MCF 10A (cell line): ENCODE measurements at regions of chr1 and their contacts with region 1.

Region 1: DNA sequence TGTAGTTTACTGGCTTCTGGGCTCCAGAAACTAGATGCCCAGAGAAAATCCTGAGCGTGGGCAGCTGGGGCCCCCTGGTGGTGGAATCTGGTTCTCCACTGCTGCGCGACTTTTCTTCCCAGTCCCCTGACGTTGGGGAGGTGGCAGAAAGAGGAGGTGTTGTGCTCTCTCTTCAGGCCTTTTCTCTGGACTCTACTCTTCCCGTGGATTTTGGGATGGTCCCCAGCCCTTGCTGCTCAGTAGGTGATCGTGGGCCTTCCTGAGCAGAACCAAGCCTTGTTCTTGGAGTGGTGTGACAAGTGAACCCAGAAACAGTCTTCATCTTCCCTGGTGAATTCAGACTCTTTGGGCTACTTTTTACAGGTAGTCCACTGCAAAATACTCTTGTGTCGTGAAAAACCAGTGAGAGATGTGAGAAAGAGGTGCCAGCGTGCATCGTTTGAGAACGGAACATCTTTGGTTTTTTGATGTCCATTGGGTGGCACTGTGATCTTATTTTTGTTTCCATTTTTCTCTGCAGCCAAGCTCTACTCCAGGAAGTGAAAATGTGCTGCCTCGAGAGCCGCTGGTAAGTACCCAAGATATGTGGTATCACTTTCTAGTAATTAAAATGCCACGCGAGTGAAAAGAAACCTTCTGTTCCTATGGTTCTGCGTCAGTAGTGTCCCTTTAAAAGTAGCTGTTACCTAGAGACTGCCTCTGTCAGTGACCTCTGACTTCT is 20.2 kb downstream of the PEX14 start:
- DNase-seq: peak; percentile 76
- H3K4me3 Mint-ChIP-seq: peak overlapping the region; percentile 58
- H3K27ac Mint-ChIP-seq: peak overlapping the region; percentile 80
- H3K4me1 Mint-ChIP-seq: peaks cover 26% of the 10 kb centered on the region
- H3K27me3 Mint-ChIP-seq: no peaks in the 10 kb centered on the region
- CTCF ChIP-seq: peak; percentile 83

Region 2: GRCh38 chr1:10267319-10267718 is 227.6 kb before region 1 on chr1:
- CTCF ChIA-PET with region 1: no interaction called
- POLR2A ChIA-PET with region 1: no interaction called
- intact Hi-C with region 1: no loop called
- DNase-seq: peak; percentile 17
- H3K4me3 Mint-ChIP-seq: no peak overlapping the region
- H3K27ac Mint-ChIP-seq: no peak overlapping the region
- H3K4me1 Mint-ChIP-seq: no peaks in the 10 kb centered on the region
- H3K27me3 Mint-ChIP-seq: no peaks in the 10 kb centered on the region
- CTCF ChIP-seq: no peak

Region 3: DNA sequence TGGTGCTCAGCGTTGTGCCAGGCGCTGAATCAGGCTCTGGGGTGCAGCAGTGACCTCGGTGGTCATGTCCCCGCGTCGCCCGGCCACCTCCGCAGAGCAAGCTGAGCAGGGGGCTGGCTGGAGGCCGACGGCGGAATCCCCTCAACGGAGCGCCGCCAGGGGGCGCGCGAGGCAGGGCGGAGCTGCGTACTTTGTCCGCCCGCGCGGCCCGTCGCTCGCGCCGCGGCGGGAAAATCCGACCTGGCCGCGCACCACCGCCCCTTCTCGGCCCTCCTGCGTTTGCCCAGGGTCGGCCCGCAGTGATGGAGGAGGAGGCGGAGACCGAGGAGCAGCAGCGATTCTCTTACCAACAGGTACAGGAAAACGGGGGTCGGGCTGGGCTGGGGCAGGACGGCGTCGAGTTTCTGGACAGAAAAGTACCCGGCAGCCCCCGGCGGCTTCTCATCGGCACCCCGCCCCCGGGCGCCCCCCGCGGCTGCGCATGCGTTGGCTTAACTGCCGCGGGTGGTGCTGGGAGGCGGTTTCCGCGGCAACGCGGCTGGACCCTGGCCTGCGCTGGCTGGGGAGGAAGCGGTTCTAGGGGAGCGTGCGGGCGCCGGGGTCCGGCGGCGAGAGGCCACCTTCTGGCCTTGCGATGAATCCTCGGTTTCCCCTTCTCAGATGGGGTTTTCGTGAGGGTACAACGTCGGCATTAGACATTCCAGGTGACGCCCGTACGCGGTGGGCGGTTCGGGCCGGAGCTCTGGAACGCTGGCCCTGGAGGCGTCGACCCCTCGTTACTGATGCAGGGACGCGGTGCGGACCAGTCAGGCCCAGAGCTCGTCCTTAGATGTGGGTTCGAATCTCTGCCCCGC is 64.5 kb before region 1 on chr1 and contains the start of gene CENPS:
- CTCF ChIA-PET with region 1: interaction called, 119 read pairs
- POLR2A ChIA-PET with region 1: interaction called, 73 read pairs
- intact Hi-C with region 1: no loop called
- DNase-seq: peak; percentile 88
- H3K4me3 Mint-ChIP-seq: peak within 1 kb of the TSS; percentile 89
- H3K27ac Mint-ChIP-seq: peak within 1 kb of the TSS; percentile 87
- H3K4me1 Mint-ChIP-seq: peaks cover 10% of the 10 kb centered on the region
- H3K27me3 Mint-ChIP-seq: no peaks in the 10 kb centered on the region
- CTCF ChIP-seq: peak; percentile 98
- total RNA-seq, gene CENPS: 19.0 and 19.4 TPM in 2 replicates

Region 4: GRCh38 chr1:10467051-10467450 is 27.9 kb before region 1 on chr1:
- CTCF ChIA-PET with region 1: interaction called, 18 read pairs
- POLR2A ChIA-PET with region 1: interaction called, 10 read pairs
- intact Hi-C with region 1: no loop called
- DNase-seq: no peak
- H3K4me3 Mint-ChIP-seq: no peak overlapping the region
- H3K27ac Mint-ChIP-seq: no peak overlapping the region
- H3K4me1 Mint-ChIP-seq: no peaks in the 10 kb centered on the region
- H3K27me3 Mint-ChIP-seq: no peaks in the 10 kb centered on the region
- CTCF ChIP-seq: no peak

Region 5: GRCh38 chr1:10484521-10484920 is 10.4 kb before region 1 on chr1:
- CTCF ChIA-PET with region 1: interaction called, 32 read pairs
- POLR2A ChIA-PET with region 1: interaction called, 13 read pairs
- intact Hi-C with region 1: no loop called
- DNase-seq: no peak
- H3K4me3 Mint-ChIP-seq: no peak overlapping the region
- H3K27ac Mint-ChIP-seq: no peak overlapping the region
- H3K4me1 Mint-ChIP-seq: peaks cover 3% of the 10 kb centered on the region
- H3K27me3 Mint-ChIP-seq: no peaks in the 10 kb centered on the region
- CTCF ChIP-seq: no peak

Region 6: GRCh38 chr1:10901086-10901890 is 406.4 kb after region 1 on chr1:
- CTCF ChIA-PET with region 1: interaction called, 3 read pairs
- POLR2A ChIA-PET with region 1: interaction called, 16 read pairs
- intact Hi-C with region 1: no loop called
- DNase-seq: peak; percentile 63
- H3K4me3 Mint-ChIP-seq: peak overlapping the region; percentile 72
- H3K27ac Mint-ChIP-seq: peak overlapping the region; percentile 93
- H3K4me1 Mint-ChIP-seq: peaks cover 43% of the 10 kb centered on the region
- H3K27me3 Mint-ChIP-seq: no peaks in the 10 kb centered on the region
- CTCF ChIP-seq: no peak